ENCODE measurements at regions of chr3 and their contacts with region 1.

Region 1: DNA sequence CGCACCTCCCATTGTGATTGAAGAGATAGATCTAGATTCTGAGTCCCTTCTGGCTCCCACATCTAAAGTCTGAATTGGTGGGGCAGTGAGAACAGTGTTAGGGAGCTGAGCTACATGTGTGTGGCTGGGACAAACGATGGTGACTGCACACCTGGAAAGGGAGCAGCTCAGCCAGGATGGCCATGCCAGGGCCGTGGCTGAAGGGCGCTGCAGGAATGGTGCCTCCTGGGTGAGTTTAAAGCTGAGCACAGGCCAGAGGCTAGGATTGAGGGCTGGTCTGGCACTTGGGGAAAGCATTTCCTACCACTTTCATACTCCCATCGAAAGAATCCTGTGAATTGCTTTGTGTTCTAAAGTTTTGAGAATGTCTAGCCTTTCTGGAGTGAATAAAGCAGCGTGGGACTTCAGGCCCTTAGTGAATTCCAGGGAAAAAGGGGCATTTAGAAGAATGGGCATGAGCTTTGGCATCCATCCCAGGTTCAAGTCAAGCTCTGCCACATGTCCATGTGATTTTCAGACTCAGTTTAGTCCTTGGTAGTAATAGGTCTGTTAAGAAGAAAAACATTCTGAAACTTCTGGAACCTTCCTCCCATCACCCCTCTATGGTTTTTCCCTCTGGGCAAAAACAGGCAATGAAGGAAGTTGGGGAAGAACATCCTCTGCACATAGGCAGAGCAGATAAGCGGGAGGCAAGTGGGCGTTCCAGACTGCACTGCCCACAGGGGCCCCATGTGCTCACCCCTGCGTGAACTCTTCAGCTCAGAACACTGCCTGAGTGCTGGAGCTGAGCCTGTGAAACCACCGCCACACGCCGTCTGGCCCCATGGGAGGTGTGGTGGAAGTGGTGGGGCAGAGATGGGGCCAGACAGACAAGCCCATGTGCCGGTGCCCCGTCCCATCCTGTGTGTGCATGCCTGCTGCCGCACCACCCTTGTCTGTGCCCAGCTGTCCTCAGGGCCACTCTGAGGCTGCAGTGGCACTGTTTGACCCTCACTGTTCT is 12.9 kb upstream of the CPNE9 start:
- DNase-seq: peak; percentile 43 to 80 (median 60)
- ATAC-seq: peak; percentile 78
- H3K4me3 ChIP-seq: no peak overlapping the region
- H3K27ac ChIP-seq: peak overlapping the region; percentile 18; the same call in 1 of the 3 replicates
- H3K4me1 ChIP-seq: peaks cover 20 to 26% of the 10 kb centered on the region in 2 experiments; a peak in 4 of 5 replicates
- H3K27me3 ChIP-seq: no peaks in the 10 kb centered on the region
- CTCF ChIP-seq: no peak
- EP300 ChIP-seq: no peak
- POLR2A ChIP-seq: no peak
- RAD21 ChIP-seq: no peak

Region 2: GRCh38 chr3:9183811-9184460 is 506.8 kb before region 1 on chr3:
- CTCF ChIA-PET with region 1: no interaction called
- POLR2A ChIA-PET with region 1: no interaction called
- in situ Hi-C with region 1: no loop called
- intact Hi-C with region 1: no loop called
- DNase-seq: no peak
- ATAC-seq: no peak
- H3K4me3 ChIP-seq: no peak overlapping the region
- H3K27ac ChIP-seq: no peak overlapping the region
- H3K4me1 ChIP-seq: no peaks in the 10 kb centered on the region
- H3K27me3 ChIP-seq: peaks cover 38 to 52% of the 10 kb centered on the region in 2 experiments
- CTCF ChIP-seq: no peak
- EP300 ChIP-seq: no peak
- POLR2A ChIP-seq: no peak
- RAD21 ChIP-seq: no peak

Region 3: DNA sequence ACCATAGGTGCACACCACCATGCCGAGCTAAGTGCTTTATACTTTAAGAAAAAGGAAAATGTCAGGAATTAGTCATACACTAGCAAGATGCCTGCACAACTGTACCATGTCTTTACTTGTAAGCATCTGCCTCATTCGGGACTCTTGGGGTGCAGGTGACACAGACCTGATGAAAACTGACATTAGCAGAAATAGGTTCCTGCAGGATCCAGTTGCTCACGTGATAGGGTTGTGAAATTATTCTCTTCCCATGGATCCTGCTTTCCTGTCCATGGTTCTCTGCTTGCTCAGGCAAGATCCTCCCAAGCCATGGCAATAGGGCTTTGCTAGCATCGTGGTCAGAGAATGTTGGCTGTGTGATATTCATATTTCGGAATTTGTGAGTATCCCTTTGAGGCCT is 126.9 kb before region 1 on chr3:
- CTCF ChIA-PET with region 1: no interaction called
- POLR2A ChIA-PET with region 1: no interaction called
- in situ Hi-C with region 1: no loop called
- intact Hi-C with region 1: no loop called
- DNase-seq: no peak
- ATAC-seq: no peak
- H3K4me3 ChIP-seq: no peak overlapping the region
- H3K27ac ChIP-seq: no peak overlapping the region
- H3K4me1 ChIP-seq: no peaks in the 10 kb centered on the region
- H3K27me3 ChIP-seq: peaks cover 5 to 26% of the 10 kb centered on the region in 2 experiments; a peak in 3 of 5 replicates
- CTCF ChIP-seq: no peak
- EP300 ChIP-seq: no peak
- POLR2A ChIP-seq: no peak
- RAD21 ChIP-seq: no peak

Region 4: DNA sequence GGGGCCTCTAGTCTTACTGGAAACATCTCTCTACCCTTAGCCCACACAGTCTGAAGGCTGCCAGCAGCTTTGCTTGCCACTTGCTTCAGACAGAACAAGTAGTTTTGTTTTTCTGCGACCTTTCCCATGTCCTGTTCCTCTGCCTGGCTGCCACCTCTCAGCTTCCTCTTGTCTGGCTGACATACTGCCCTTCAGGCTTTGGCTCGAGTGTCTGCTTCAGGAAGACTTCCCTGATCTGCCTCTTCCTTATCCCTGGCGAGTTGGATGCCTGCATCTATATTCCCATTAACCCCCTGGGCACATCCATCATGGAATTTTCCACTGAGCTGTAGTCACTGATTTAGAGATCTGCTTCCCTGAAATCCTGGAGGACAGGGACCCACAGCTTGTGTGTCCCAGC is 12.3 kb before region 1 on chr3:
- CTCF ChIA-PET with region 1: no interaction called
- POLR2A ChIA-PET with region 1: interaction called, 15 read pairs
- in situ Hi-C with region 1: no loop called
- intact Hi-C with region 1: no loop called
- DNase-seq: no peak
- ATAC-seq: no peak
- H3K4me3 ChIP-seq: no peak overlapping the region
- H3K27ac ChIP-seq: no peak overlapping the region
- H3K4me1 ChIP-seq: no peaks in the 10 kb centered on the region
- H3K27me3 ChIP-seq: no peaks in the 10 kb centered on the region
- CTCF ChIP-seq: no peak
- EP300 ChIP-seq: no peak
- POLR2A ChIP-seq: no peak
- RAD21 ChIP-seq: no peak

Region 5: DNA sequence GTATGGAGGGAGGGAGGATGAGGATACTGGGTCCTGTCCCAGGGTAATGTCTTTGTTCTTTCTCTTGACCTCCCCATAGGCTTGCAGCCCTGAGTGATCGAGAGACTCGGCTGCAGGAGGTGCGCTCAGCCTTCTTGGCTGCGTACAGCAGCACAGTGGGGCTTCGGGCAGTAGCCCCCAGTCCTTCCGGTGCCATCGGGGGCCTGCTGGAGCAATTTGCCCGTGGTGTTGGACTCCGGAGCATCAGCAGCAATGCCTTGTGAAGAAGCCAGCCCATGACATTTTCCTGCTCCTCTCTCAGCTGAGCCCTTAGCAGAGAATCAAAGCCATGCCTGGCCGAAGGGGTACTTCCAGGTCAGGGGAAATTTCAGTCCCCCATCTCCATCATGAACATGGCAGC is 11.0 kb after region 1 on chr3:
- CTCF ChIA-PET with region 1: no interaction called
- POLR2A ChIA-PET with region 1: interaction called, 12 read pairs
- in situ Hi-C with region 1: no loop called
- intact Hi-C with region 1: no loop called
- DNase-seq: no peak
- ATAC-seq: no peak
- H3K4me3 ChIP-seq: no peak overlapping the region
- H3K27ac ChIP-seq: no peak overlapping the region
- H3K4me1 ChIP-seq: peaks cover 8 to 18% of the 10 kb centered on the region in 2 experiments; a peak in 4 of 5 replicates
- H3K27me3 ChIP-seq: 0 out of 5 replicates have a peak, but pooled peaks cover 0 to 3% of the 10 kb centered on the region in 2 experiments
- CTCF ChIP-seq: no peak
- EP300 ChIP-seq: no peak
- POLR2A ChIP-seq: no peak
- RAD21 ChIP-seq: no peak

Measured in K562 (cell line).